ENCODE measurements at regions of chr3 and their contacts with region 1.

Region 1: DNA sequence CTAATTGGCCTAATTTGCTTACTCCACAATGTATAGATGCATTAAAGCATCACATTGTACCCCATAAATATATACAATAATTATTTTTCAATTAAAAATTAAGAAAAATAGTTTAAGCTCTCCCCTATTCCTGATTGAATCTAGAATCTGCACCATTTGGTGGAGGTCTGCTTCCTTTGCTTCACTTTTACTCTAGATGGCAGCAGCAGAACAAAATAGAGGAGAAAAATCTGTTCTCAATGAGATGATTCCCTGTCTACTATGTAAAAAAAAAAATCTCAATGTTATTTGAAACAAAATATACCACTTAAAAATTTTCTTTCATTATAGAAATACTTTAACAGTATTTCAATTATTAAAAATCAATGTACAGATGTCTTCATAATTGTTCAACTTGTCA is 109.6 kb upstream of the FXR1 start:
- DNase-seq: no peak
- H3K4me3 ChIP-seq: no peak overlapping the region
- H3K27ac ChIP-seq: no peak overlapping the region
- H3K4me1 ChIP-seq: no peaks in the 10 kb centered on the region
- H3K27me3 ChIP-seq: no peaks in the 10 kb centered on the region
- CTCF ChIP-seq: peak; percentile 70

Region 2: DNA sequence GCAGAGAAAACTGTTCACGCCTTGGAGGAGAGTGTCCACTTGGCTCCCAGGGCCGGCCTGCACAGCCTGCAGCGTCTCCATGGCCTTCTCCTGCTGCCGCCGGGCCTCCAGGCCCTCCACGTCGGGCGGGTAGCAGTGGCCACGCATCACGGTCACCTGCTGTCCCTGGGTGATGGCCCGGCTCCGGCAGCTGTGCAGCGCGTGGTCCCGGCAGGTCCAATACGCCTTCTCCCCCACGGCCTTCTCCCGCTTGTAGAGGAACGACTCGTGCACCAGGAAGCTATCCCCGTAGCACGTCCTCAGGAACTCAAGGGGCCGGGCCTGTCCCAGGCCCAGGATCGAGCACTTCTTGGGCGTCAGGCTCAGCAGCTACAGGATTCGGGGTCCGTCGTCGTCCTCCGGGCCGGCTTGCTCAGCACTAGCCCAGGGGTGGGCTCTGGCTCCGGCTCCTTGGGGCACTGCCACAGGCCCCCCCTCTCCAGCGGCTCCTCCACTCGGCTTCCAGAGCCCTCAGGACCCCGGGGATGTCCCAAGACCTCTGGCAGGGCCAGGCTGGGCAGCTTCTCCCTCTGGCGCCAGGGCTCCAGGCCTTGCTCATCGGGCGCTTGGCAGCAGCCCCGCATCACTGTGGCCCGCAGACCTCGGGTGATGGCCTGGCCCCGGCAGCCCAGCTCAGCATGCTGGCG is 26.0 kb after region 1 on chr3:
- CTCF ChIA-PET with region 1: no interaction called
- POLR2A ChIA-PET with region 1: no interaction called
- intact Hi-C with region 1: no loop called
- DNase-seq: no peak
- H3K4me3 ChIP-seq: no peak overlapping the region
- H3K27ac ChIP-seq: no peak overlapping the region
- H3K4me1 ChIP-seq: no peaks in the 10 kb centered on the region
- H3K27me3 ChIP-seq: no peaks in the 10 kb centered on the region
- CTCF ChIP-seq: no peak

Region 3: DNA sequence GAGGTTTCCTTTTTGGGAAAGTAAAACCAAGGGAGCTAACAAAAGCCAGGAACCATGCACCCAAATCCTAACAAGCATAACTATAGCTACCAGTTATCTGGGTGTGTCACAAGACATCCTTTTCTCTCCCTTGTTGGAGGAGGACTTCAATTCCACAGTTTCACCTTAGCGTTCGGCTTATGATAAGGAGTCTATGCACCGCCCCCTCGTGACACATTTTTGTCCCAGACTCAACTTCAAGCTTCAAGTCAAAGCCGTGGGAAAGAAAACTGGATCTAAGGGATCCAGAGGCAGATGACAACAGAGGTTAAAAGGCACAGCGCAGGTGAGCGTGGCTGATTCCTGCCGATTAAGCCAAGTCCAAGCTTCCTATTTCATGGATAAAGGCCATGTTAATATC is 95.7 kb after region 1 on chr3:
- CTCF ChIA-PET with region 1: no interaction called
- POLR2A ChIA-PET with region 1: no interaction called
- intact Hi-C with region 1: no loop called
- DNase-seq: no peak
- H3K4me3 ChIP-seq: no peak overlapping the region
- H3K27ac ChIP-seq: no peak overlapping the region
- H3K4me1 ChIP-seq: no peaks in the 10 kb centered on the region
- H3K27me3 ChIP-seq: no peaks in the 10 kb centered on the region
- CTCF ChIP-seq: no peak

Region 4: GRCh38 chr3:180989291-180990163 is 186.7 kb after region 1 on chr3 and contains the start of gene DNAJC19:
- CTCF ChIA-PET with region 1: no interaction called
- POLR2A ChIA-PET with region 1: no interaction called
- intact Hi-C with region 1: loop called (anchors 10 kb)
- DNase-seq: peak; percentile 95 to 98
- H3K4me3 ChIP-seq: peak within 1 kb of the TSS; percentile 76
- H3K27ac ChIP-seq: peak within 1 kb of the TSS; percentile 68
- H3K4me1 ChIP-seq: peaks cover 16% of the 10 kb centered on the region
- H3K27me3 ChIP-seq: no peaks in the 10 kb centered on the region
- CTCF ChIP-seq: no peak
- total RNA-seq, gene DNAJC19: 85.6 and 86.9 TPM in 2 replicates

Region 5: DNA sequence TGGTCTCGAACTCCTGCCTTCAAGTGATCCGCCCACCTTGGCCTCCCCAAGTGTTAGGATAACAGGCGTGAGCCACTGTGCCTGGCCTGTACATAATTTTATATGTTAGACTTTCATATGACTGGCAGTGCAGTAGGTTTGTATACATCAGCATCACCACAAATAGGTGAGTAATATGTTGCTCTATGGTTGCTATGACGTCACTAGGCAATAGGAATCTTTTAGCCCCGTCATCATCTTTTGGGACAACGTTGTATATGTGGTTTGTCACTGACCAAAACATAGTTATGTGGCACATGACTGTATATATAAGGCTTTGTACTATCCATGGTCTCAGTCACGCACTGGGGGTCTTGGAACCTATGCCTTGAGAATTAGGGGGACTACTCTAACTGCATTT is 203.7 kb after region 1 on chr3:
- CTCF ChIA-PET with region 1: no interaction called
- POLR2A ChIA-PET with region 1: no interaction called
- intact Hi-C with region 1: no loop called
- DNase-seq: no peak
- H3K4me3 ChIP-seq: no peak overlapping the region
- H3K27ac ChIP-seq: no peak overlapping the region
- H3K4me1 ChIP-seq: no peaks in the 10 kb centered on the region
- H3K27me3 ChIP-seq: no peaks in the 10 kb centered on the region
- CTCF ChIP-seq: no peak

Region 6: DNA sequence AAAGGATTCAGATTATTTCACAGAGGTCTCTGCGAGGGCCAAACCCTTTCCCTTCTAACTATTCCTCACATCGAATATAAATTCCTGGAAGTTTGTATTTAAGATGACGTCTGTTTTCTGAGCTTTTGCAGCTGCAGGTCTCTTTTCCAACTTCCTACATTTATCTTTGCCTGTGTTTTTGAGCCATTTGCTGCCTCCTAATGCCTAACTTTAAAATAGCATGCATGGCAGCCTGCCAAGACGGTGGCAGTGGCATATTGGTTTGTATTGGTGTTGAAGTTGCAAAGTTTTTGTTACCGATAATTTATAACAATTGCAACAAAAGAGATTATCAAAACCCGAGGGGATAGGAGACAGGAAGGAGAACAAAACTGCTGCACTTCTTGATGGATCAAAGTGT is 373.8 kb after region 1 on chr3:
- CTCF ChIA-PET with region 1: no interaction called
- POLR2A ChIA-PET with region 1: no interaction called
- intact Hi-C with region 1: loop called (anchors 10 kb)
- DNase-seq: peak; percentile 44 to 48
- H3K4me3 ChIP-seq: no peak overlapping the region
- H3K27ac ChIP-seq: no peak overlapping the region
- H3K4me1 ChIP-seq: no peaks in the 10 kb centered on the region
- H3K27me3 ChIP-seq: no peaks in the 10 kb centered on the region
- CTCF ChIP-seq: peak; percentile 74

Region 7: GRCh38 chr3:181278468-181279238 is 475.8 kb after region 1 on chr3:
- CTCF ChIA-PET with region 1: no interaction called
- POLR2A ChIA-PET with region 1: no interaction called
- intact Hi-C with region 1: loop called (anchors 10 kb)
- DNase-seq: no peak
- H3K4me3 ChIP-seq: no peak overlapping the region
- H3K27ac ChIP-seq: no peak overlapping the region
- H3K4me1 ChIP-seq: no peaks in the 10 kb centered on the region
- H3K27me3 ChIP-seq: no peaks in the 10 kb centered on the region
- CTCF ChIP-seq: peak; percentile 52

Measured in PC-9 (cell line).